ENCODE measurements at regions of chr7 and their contacts with region 1.

Region 1: DNA sequence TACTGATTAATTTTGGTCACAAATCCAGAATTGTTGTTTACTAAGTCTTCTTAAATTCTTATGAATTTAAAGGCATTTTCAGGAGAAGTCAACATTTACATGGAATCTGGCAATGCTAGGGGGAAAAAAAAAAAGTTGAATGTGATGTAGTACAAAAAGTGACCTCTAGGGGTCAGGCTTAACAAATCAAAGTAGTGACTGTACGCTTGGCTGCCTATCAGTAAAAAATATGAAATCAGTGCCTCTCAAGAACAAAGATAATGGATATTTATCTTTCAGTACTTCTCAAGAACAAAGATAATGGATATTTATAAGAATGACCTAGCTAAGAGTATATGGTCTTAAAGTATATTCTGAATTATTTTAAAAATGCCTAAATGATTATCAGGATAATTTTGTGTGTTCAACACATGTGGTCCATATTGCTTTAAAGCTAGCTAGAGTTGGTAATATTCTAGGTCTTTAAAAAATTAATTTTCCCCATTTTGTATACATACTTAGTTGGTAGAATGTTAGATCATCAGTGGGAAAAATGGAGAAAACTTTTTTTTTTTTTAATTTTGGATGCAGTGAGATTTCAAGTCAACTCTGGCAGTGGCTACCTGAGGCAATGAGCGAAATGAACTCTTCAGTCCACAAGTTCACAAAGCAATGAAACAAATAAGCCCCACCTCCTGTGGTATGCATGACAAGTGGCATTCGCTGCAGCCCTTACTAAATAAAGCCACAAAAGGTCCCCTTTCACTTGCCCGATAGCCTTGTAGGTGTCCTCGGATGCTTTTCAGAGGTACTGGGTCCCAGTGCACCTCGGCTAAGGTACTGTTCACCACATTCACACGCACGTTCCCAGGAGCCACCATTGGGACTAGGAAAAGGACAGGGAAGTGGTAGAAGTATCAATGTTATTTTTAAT is 51.2 kb upstream of the LAMB4 start:
- DNase-seq: peak; percentile 35
- CTCF ChIP-seq: peak; percentile 42

Region 2: DNA sequence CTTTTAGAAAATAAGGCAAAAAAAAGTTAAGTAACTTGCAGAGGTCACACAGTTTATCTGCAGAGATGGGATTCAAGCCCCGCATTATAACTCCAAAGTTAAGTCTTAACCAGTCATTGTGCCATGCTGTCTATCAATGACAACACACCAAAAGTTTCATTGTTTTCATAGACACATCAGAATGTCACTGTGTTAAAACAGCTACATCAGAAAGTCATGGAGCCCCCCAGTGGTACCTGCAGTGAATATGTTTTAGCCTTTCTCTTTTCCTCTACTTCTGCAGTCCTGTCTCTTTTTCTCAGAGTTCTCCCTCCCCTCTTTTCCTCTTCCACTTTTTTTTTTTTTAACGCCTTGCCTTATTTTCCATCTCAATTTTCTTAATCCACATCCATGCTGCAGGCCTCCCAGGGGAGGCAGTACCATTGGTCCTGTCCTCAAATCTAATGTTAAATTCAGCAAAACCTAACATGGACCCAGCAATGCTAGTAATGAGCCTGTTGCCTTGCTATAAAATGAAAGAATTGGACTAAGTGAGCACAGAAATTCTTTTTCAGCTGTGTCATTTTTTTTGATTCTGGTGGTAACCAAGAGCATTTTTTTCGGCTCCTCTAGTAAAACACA is 278.7 kb after region 1 on chr7:
- in situ Hi-C with region 1: loop called (anchors 10 kb)
- DNase-seq: peak; percentile 57
- CTCF ChIP-seq: peak; percentile 41

Region 3: DNA sequence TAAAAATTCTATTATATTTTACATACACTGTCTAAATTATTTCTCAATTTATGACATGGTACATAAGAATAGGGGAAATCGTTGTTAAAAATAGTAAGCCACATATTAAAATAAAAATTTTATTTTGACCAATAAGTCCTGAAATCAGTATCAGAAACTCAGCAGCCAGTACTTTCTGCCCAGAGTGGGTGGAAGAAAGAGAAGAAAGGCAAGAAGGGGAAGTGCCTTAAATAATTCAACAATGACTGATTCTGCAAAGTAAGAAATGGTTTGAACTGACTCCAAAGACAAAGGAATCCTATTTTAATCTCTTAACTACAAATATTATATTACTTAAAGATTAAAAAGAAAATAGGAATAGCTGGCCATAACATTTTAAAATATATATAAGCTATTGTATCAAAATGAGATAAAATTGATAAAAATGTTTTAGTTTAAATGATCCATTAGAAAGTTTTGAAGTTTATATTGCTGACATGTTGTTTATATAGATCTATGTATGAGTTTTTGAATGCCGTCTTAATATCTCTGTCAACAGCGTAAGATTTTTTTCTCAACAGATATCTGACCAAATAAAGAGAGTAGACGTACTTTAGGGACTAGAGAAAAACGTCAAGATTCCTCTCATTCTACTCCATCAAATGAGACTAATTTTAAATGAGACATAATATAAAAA is 305.1 kb after region 1 on chr7:
- in situ Hi-C with region 1: loop called (anchors 10 kb)
- DNase-seq: peak; percentile 31
- CTCF ChIP-seq: no peak

Region 4: GRCh38 chr7:109864230-109864629 is 1682.9 kb after region 1 on chr7:
- in situ Hi-C with region 1: no loop called
- DNase-seq: no peak
- CTCF ChIP-seq: no peak

Measured in GM13976 (cell line).